Right ventricle myocardium inferior (tissue), 1 donor: ENCODE measurements at regions of chrX and their contacts with region 1.

Region 1: DNA sequence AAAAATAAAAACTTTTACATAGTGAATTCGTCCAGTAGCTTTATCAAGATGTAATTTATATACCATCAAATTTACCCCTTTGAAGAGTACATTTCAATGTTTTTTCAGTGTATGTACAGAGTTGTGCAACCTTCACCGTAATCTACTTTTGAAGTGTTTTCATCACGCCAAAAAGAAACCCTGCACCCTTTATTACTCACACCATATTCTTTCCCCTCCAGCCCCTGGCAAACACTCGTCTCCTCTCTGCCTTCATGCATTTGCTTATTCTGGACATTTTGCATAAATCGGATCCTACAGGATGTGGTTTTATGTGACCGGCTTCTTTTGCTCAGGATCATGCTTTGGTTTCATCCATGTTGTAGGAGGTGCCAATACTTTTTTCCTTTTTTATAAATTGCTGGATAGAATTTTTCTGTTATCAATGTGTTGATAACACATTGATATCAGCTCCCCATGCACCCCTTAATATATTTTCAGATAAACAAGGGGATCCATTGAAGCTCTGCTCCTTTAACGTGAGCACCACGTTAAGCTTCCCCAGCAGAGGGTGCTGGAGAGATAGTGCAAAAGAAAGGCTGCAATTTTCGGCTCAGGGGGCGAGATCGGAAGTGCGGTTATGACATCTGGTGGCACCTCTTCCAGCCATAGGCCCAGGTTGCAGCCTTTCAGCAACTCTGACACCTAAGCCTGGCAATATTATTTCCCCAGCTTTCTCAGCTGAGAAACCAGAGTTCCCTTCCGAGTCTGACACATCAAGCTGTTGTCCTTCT is 100.1 kb upstream of the VCX3B start:
- DNase-seq: no peak
- ATAC-seq: no peak

Region 2: GRCh38 chrX:7996414-7996813 is 368.1 kb before region 1 on chrX:
- intact Hi-C with region 1: loop called (anchors 5 kb)
- DNase-seq: no peak
- ATAC-seq: no peak

Region 3: DNA sequence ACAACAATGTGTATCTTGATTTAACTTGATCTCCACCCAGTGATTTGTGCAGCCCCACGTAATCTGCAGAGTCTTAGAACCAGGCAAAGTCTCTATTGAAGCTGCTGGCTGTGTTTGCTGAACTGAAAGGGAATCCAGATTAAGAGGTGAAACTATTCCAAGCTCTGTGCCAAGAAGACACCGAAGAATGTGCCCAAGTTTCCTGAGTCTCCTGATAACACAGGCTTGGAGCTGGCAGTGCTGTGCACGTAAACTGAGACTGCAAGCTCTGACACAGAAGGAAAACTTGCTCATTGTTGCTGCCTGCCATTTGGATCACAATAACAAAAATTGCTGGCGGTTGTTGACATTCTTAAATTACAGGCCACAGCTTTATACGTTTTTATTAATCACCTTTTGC is 39.9 kb after region 1 on chrX:
- intact Hi-C with region 1: no loop called
- DNase-seq: no peak
- ATAC-seq: no peak